Activated CD8-positive, alpha-beta T cell treated with anti-CD3 and anti-CD28 coated beads, Interleukin-2, amount 10 ng/mL, durations not matched to agents 7 days and 5 days (primary cell): ENCODE measurements at regions of chrX and their contacts with region 1.

Region 1: DNA sequence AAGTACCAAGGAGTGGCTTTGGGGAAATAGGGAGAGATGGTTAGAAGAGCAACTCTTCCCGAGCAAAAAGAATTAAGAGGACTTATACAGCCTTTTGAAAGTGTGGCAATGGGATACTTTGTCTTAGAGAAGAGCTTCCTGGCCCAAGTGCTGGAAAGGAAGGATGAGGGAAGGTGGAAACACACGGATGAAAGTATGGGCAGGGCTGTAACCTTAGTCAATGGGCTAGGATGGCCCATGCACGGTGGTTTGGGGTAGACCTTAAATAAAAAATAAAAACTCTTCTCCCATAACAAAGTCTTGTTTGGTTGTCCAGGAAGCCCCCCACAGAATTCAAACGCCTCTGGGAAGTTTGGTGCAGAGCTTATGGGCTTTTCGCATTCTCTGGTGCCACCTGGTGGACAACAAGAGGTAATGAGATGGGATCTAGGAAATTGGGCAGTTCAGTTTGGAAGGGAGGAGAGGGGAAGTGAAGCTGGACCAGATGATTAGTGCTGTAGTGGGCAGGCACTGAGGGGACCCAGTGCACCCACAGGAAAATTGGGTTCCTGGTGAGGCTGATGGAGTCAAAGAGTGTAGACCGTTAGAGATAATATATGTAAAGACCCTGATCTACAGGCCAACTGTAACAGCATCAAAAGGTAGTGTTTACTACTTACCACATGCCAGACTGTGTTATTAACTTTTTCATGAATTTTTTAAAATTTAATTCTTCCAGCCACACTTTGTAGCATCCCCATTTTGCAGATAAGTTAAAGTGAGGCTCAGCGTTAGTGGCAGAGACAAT is 13.8 kb upstream of the ENOX2 start:
- DNase-seq: peak; percentile 41
- ATAC-seq: peak; percentile 39
- H3K4me3 Mint-ChIP-seq: no peak overlapping the region
- H3K27ac Mint-ChIP-seq: no peak overlapping the region
- H3K4me1 Mint-ChIP-seq: no peaks in the 10 kb centered on the region
- H3K27me3 Mint-ChIP-seq: no peaks in the 10 kb centered on the region

Region 2: DNA sequence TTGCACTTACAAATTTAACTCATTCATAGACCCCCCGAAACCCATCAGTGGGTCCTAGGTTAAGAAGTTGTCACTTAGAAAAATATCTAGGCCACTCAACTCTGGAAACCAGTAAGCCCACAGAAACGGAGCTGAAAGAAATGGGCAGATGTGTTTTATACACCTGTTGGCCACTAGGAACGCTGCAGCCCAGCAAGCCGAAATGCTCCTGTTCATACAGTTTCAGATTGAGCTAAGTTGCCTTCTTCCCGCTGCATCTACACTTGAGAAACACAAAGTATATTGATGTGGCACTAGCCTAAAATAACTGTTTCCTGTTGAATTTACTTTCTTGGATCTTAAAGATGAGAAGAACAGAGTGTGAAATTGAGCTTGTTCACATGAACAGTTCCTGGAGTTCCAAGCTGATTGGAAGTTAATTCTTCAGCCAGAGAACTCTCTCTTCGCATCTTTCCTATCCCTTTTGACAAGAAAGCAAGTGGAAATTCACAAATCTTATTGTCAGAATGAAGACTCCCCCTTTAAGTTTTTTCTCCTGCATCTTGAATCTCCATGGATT is 340.9 kb before region 1 on chrX:
- CTCF ChIA-PET with region 1: interaction called, 14 read pairs
- POLR2A ChIA-PET with region 1: no interaction called
- DNase-seq: peak; percentile 38
- ATAC-seq: peak; percentile 47
- H3K4me3 Mint-ChIP-seq: no peak overlapping the region
- H3K27ac Mint-ChIP-seq: no peak overlapping the region
- H3K4me1 Mint-ChIP-seq: no peaks in the 10 kb centered on the region
- H3K27me3 Mint-ChIP-seq: peaks cover 3% of the 10 kb centered on the region

Region 3: GRCh38 chrX:131032354-131033230 is 115.8 kb after region 1 on chrX:
- CTCF ChIA-PET with region 1: no interaction called
- POLR2A ChIA-PET with region 1: no interaction called
- DNase-seq: no peak
- ATAC-seq: no peak
- H3K4me3 Mint-ChIP-seq: no peak overlapping the region
- H3K27ac Mint-ChIP-seq: no peak overlapping the region
- H3K4me1 Mint-ChIP-seq: no peaks in the 10 kb centered on the region
- H3K27me3 Mint-ChIP-seq: peaks cover 2% of the 10 kb centered on the region